OCI-LY7 (cell line): ENCODE measurements at regions of chr10 and their contacts with region 1.

Region 1: DNA sequence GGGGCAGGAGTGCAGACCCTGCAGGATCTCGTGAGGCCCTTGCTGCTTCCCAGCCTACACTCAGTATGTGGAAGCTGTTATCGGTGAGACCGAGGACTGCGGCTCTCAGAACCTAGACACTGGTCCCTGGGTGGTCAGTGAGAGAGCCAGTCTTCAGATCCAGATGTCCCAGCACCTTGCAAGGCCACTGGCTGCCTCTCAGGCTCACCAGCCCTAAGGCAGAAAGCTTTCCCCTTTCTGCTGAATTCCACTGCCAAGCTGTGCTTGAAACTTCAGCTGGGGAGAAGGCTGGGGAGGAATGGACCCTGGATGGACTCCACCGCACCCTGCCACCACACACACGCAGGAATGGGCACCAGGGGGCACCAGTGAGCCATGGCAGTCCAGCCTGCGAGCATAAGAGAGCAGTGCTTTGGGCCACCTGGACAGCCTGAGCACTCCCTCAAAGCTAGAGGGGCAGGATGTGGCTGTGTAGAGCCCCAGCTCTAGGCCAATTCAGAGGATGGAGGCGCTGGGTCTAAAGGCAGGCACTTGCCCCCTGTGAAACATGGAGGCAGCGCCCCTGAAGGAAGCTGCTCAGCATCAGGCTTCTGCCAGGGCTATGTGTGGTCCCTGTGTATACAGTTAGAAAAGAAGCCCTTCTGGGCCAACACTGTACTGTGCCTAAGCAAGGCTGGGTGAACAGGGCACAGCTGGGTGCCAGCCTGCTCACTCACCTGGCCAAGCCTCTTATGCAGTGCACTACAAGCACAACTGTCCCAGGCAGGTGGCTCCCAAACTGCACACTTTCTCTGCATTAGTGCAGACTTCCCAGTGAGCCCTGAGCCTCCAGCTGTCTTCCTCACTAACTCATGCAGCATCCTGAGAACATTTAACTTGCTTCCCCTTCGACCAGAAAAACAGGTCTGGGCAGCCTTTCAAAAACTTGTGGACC is 21.6 kb downstream of the TMEM72 start:
- DNase-seq: peak; percentile 90
- H3K4me3 ChIP-seq: no peak overlapping the region
- H3K27ac ChIP-seq: no peak overlapping the region
- H3K4me1 ChIP-seq: no peaks in the 10 kb centered on the region
- CTCF ChIP-seq: peak; percentile 94

Region 2: DNA sequence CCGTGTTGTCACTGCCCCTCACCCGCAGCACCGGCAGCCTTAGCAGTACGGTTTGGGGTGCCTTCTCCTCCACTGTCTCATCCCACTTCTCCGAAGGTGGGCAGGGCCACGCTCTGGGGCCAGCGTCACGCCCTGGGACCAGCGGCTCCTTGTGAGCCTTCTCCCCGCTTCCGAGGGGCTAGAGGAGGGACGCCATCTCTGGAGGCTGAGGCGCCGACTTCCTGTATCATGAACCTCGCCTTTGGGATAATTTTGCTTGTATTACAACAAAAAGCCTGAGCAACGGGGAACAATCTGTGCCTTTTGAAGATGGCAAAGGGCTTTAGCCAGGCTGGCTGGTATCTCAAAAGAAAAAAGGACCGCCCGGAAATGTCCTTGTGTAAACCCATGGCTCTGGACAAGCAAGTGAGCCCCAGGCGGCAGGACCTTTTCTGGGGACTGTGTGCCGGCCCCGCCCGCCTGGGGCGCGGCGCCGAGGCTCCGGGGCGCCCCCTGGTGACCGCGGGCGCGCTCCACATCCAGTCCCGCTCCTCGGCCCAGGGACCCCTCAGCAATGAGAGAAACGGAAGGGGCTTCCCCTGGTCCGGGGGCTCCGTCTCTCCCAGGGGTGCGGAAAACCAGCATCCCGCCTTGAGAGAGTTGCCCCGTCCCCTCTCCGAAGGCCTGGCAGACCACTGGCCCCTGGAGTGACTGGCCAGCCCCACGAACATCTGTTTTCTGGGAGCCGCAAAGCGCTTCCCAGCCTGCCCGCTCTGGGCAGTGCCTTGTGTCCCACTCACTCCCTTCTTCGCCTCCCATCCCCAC is 42.0 kb after region 1 on chr10:
- CTCF ChIA-PET with region 1: interaction called, 9 read pairs
- POLR2A ChIA-PET with region 1: interaction called, 3 read pairs
- intact Hi-C with region 1: loop called (anchors 1 kb)
- DNase-seq: peak; percentile 80
- H3K4me3 ChIP-seq: peak overlapping the region; percentile 65
- H3K27ac ChIP-seq: peak overlapping the region; percentile 3
- H3K4me1 ChIP-seq: peaks cover 18% of the 10 kb centered on the region
- CTCF ChIP-seq: peak; percentile 92